ENCODE measurements at regions of chr6 and their contacts with region 1.

Region 1: DNA sequence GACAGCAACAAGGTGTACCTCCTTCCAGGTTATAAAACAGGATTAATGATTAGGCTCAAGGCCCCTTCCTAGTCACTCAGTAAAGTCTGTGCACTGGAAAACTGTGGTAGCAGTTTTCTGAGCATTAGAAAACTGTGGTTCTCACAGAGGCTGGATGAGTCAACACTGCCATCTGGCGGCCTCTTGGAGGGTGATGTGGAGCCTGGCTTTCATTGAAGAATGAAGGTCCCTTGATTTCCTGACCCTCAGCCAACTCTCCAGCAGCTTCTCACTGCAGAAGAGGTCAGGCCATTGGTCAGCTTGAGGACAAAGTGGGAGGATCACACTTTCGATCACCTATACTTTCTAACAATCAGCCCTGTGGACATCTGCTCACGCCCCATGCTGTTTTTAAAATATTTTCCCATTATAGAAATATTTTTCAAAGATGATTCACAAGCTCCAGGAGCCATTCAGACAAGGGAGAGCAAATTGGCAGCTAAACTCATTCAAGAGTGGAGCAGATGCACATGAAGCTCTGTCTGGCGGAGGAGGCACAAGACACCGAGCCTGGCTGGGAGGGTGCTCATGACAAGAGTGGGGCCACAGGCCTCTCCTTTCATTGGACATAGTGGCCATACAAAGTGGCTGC is 23.2 kb downstream of the PSMB1 start:
- DNase-seq: peak; percentile 45 to 49
- H3K4me3 ChIP-seq: no peak overlapping the region
- H3K27ac ChIP-seq: no peak overlapping the region
- H3K4me1 ChIP-seq: no peaks in the 10 kb centered on the region
- H3K27me3 ChIP-seq: no peaks in the 10 kb centered on the region
- CTCF ChIP-seq: peak; percentile 86

Region 2: DNA sequence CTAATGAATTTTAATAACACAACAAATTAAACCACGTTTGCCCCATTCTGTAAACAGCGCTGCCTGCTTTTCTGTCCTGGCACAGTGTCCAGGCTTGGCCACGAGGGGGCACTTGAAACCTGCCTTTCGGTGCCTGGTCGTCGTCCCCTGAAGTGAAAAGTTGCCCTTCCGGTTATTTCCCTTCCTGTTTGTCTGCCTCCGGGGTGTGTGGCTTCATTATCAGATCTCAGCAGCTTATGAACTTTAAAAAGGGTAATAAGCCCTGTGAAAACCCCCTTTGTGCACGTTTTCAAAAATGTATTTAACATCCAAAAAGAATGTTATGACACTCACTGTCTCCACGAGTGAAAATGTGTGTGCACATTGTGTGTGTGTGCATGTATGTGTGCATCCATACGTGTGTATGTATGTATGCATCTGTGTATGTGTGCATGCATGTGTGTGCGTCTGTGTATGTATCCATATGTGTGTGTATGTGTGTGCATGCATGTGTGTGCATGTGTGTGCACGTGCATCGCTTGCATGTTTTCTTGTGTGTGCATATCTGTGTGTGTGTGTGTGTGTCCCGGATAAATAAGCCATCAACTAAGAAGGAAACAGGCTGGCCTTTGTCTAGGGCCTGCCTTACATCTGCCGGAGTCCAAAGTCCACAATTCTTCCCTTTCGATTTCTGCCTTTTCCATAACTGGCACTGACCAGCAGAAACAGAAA is 1634.7 kb before region 1 on chr6:
- CTCF ChIA-PET with region 1: no interaction called
- POLR2A ChIA-PET with region 1: no interaction called
- intact Hi-C with region 1: loop called (anchors 5 kb)
- DNase-seq: peak; percentile 61 to 73
- H3K4me3 ChIP-seq: no peak overlapping the region
- H3K27ac ChIP-seq: no peak overlapping the region
- H3K4me1 ChIP-seq: no peaks in the 10 kb centered on the region
- H3K27me3 ChIP-seq: peaks cover 75% of the 10 kb centered on the region
- CTCF ChIP-seq: peak; percentile 90

Region 3: GRCh38 chr6:168956884-168957730 is 1572.8 kb before region 1 on chr6:
- CTCF ChIA-PET with region 1: no interaction called
- POLR2A ChIA-PET with region 1: no interaction called
- intact Hi-C with region 1: loop called (anchors 2 kb)
- DNase-seq: peak; percentile 12 to 46
- H3K4me3 ChIP-seq: no peak overlapping the region
- H3K27ac ChIP-seq: no peak overlapping the region
- H3K4me1 ChIP-seq: no peaks in the 10 kb centered on the region
- H3K27me3 ChIP-seq: peaks cover 61% of the 10 kb centered on the region
- CTCF ChIP-seq: peak; percentile 73

Region 4: DNA sequence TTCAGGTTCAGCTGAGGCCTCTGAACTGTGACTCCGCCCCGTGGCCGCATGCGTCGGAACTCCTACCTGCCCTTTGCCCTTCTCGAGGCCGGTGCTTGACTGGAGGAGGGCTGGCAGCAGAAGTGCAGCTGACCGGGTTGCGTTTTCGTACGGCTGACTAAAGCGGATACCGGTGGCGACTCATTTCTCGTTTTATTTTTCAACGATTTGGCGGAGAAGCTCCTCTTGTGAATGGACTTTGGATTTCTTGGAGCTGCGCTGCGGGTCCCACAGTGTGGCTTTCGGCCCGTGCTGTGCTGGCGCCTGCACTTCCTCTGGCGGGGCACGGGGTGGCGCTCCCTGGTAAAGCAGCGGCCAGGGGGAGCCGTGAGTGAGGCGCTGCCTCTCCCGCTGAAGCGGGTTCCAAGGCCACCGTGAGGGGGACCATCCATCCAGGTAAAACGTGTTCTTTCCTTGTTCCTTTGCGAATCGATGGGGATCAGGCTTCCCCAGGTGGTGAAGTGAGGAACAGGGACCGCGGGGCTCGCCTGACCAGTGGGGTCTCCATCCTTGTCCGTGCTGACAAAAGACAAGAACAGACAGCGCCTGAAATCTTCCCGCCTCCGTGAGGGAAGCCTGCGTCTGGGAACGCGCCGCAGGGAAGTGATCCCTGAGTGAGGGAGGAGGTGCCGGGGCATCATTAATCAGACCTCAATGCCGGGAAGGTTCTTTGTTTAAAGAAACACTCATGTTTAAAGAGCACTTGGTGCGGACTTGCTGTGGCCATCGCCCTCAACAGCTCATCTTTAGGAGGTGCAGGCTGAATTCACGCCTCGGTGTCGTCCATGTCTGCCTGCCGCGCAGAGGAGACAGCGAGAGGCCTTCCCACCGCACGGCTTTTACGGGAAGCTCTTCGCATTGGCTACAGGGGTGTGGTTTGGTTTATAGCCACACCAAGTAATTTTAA is 739.7 kb before region 1 on chr6:
- CTCF ChIA-PET with region 1: interaction called, 3 read pairs
- POLR2A ChIA-PET with region 1: no interaction called
- intact Hi-C with region 1: loop called (anchors 1 kb)
- DNase-seq: peak in 1 of 2 experiments; percentile 47
- H3K4me3 ChIP-seq: no peak overlapping the region
- H3K27ac ChIP-seq: no peak overlapping the region
- H3K4me1 ChIP-seq: no peaks in the 10 kb centered on the region
- H3K27me3 ChIP-seq: peaks cover 66% of the 10 kb centered on the region
- CTCF ChIP-seq: peak; percentile 84

Region 5: DNA sequence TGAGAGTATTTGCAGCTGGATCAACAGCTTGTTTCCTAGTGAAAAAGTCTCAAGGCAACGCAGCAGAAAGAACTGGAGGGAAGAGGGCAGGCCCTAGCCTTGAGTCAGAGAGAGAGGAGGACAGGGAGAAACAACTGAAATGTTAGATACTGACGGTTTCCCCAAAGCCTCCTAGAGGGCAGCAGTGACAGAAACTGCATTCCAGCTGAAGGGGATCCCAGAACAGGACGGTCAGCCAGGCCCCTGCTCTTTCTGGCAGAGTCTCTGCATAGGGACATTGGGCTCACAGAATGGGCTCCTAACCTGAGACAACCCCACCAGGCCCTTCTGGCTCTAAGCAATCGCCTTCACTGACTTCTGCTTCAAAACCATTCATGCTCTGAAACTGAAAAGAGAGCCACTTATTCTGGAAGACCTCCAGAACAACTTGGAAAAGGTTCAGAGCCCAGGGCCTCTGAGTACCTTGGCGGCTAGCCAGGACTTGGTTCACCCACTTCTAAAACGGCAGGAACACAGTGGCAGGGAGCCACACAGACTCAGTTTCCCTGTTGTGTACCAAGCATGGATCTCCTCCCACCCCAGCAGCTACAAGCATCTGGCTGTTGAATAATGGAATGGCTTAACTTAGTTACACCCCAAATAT is 49.8 kb before region 1 on chr6:
- CTCF ChIA-PET with region 1: no interaction called
- POLR2A ChIA-PET with region 1: no interaction called
- intact Hi-C with region 1: no loop called
- DNase-seq: no peak
- H3K4me3 ChIP-seq: no peak overlapping the region
- H3K27ac ChIP-seq: no peak overlapping the region
- H3K4me1 ChIP-seq: no peaks in the 10 kb centered on the region
- H3K27me3 ChIP-seq: peaks cover 94% of the 10 kb centered on the region
- CTCF ChIP-seq: no peak

Region 6: GRCh38 chr6:170490259-170490658 is 39.7 kb before region 1 on chr6:
- CTCF ChIA-PET with region 1: no interaction called
- POLR2A ChIA-PET with region 1: no interaction called
- intact Hi-C with region 1: no loop called
- DNase-seq: no peak
- H3K4me3 ChIP-seq: no peak overlapping the region
- H3K27ac ChIP-seq: no peak overlapping the region
- H3K4me1 ChIP-seq: no peaks in the 10 kb centered on the region
- H3K27me3 ChIP-seq: peaks cover 81% of the 10 kb centered on the region
- CTCF ChIP-seq: no peak

Region 7: DNA sequence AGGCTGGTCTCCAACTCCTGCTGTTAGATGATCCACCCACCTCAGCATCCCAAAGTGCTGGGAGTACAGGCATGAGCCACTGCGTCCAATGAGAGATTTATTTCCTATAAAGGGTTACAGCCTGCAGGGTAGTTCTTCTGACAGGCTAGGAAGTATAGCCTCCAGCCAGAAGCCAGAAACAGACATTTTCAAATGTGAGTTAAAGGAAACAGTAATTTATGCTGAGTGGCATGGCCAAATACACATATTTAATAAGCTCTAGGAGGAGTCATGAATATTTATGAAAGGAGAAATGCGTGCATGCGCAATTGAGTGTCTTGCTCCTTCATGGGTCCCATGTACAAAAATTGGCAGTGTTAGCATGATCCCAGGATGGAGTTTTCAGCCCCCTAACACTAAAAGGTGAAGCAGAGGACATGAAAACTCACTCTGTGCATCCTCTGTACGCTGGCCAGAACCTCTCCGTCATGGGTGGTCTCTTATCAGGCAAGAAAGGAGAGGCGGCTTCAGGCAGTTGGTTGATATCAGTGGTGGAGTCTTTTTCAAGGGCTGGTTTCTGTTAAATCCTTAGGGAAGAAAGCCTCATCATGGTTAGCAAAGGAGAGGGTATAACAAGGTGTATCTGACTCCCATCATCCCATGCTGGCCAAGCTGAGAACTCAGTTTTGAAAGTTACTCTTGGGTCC is 75.8 kb after region 1 on chr6:
- CTCF ChIA-PET with region 1: no interaction called
- POLR2A ChIA-PET with region 1: no interaction called
- intact Hi-C with region 1: no loop called
- DNase-seq: no peak
- H3K4me3 ChIP-seq: no peak overlapping the region
- H3K27ac ChIP-seq: no peak overlapping the region
- H3K4me1 ChIP-seq: no peaks in the 10 kb centered on the region
- H3K27me3 ChIP-seq: peaks cover 47% of the 10 kb centered on the region
- CTCF ChIP-seq: no peak

Measured in PC-9 (cell line).